Activated CD4-positive, alpha-beta memory T cell treated with anti-CD3 and anti-CD28 coated beads for 36 hours (primary cell): ENCODE measurements at regions of chr9 and their contacts with region 1.

Region 1: GRCh38 chr9:87500491-87501270 is 3.0 kb downstream of the DAPK1 start:
- DNase-seq: peak; percentile 50
- H3K4me3 Mint-ChIP-seq: no peak overlapping the region
- H3K27ac Mint-ChIP-seq: no peak overlapping the region
- H3K4me1 Mint-ChIP-seq: peaks cover 23% of the 10 kb centered on the region
- H3K27me3 Mint-ChIP-seq: peaks cover 48% of the 10 kb centered on the region

Region 2: GRCh38 chr9:87375397-87376073 is 125.1 kb before region 1 on chr9:
- CTCF ChIA-PET with region 1: interaction called, 4 read pairs
- POLR2A ChIA-PET with region 1: no interaction called
- intact Hi-C with region 1: loop called (anchors 1 kb)
- DNase-seq: no peak
- H3K4me3 Mint-ChIP-seq: no peak overlapping the region
- H3K27ac Mint-ChIP-seq: no peak overlapping the region
- H3K4me1 Mint-ChIP-seq: peaks cover 10% of the 10 kb centered on the region
- H3K27me3 Mint-ChIP-seq: peaks cover 27% of the 10 kb centered on the region

Region 3: GRCh38 chr9:87464110-87464965 is 36.3 kb before region 1 on chr9:
- CTCF ChIA-PET with region 1: no interaction called
- POLR2A ChIA-PET with region 1: no interaction called
- intact Hi-C with region 1: loop called (anchors 5 kb)
- DNase-seq: peak; percentile 64
- H3K4me3 Mint-ChIP-seq: no peak overlapping the region
- H3K27ac Mint-ChIP-seq: peak overlapping the region; percentile 75
- H3K4me1 Mint-ChIP-seq: peaks cover 16% of the 10 kb centered on the region
- H3K27me3 Mint-ChIP-seq: no peaks in the 10 kb centered on the region

Region 4: DNA sequence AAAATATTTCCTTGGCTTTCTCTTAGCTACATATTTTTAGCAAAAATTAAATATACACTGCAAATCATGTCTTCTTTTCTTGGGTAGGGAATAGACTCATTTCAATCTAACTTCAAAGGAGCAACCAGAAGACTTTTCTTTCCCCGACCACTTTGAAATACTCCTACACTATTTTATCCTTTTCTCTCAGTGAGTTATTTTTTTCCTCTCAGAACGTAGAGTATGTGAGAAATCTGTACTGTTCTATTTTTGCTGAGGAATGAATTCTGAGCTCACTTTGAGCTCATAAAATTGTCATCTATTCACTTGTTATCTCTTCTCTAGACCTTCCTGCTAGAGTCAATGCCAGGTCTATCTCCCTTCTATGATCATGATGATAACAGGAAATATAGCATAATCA is 25.2 kb before region 1 on chr9:
- CTCF ChIA-PET with region 1: no interaction called
- POLR2A ChIA-PET with region 1: no interaction called
- intact Hi-C with region 1: no loop called
- DNase-seq: no peak
- H3K4me3 Mint-ChIP-seq: no peak overlapping the region
- H3K27ac Mint-ChIP-seq: no peak overlapping the region
- H3K4me1 Mint-ChIP-seq: peaks cover 14% of the 10 kb centered on the region
- H3K27me3 Mint-ChIP-seq: no peaks in the 10 kb centered on the region

Region 5: GRCh38 chr9:87599901-87600610 is 99.4 kb after region 1 on chr9:
- CTCF ChIA-PET with region 1: no interaction called
- POLR2A ChIA-PET with region 1: no interaction called
- intact Hi-C with region 1: no loop called
- DNase-seq: no peak
- H3K4me3 Mint-ChIP-seq: no peak overlapping the region
- H3K27ac Mint-ChIP-seq: no peak overlapping the region
- H3K4me1 Mint-ChIP-seq: no peaks in the 10 kb centered on the region
- H3K27me3 Mint-ChIP-seq: peaks cover 22% of the 10 kb centered on the region

Region 6: GRCh38 chr9:87662808-87663528 is 162.3 kb after region 1 on chr9:
- CTCF ChIA-PET with region 1: no interaction called
- POLR2A ChIA-PET with region 1: no interaction called
- intact Hi-C with region 1: loop called (anchors 10 kb)
- DNase-seq: peak; percentile 79
- H3K4me3 Mint-ChIP-seq: no peak overlapping the region
- H3K27ac Mint-ChIP-seq: no peak overlapping the region
- H3K4me1 Mint-ChIP-seq: peaks cover 2% of the 10 kb centered on the region
- H3K27me3 Mint-ChIP-seq: peaks cover 10% of the 10 kb centered on the region